Activated CD4-positive, alpha-beta memory T cell treated with anti-CD3 and anti-CD28 coated beads for 36 hours (primary cell): ENCODE measurements at regions of chr22 and their contacts with region 1.

Region 1: DNA sequence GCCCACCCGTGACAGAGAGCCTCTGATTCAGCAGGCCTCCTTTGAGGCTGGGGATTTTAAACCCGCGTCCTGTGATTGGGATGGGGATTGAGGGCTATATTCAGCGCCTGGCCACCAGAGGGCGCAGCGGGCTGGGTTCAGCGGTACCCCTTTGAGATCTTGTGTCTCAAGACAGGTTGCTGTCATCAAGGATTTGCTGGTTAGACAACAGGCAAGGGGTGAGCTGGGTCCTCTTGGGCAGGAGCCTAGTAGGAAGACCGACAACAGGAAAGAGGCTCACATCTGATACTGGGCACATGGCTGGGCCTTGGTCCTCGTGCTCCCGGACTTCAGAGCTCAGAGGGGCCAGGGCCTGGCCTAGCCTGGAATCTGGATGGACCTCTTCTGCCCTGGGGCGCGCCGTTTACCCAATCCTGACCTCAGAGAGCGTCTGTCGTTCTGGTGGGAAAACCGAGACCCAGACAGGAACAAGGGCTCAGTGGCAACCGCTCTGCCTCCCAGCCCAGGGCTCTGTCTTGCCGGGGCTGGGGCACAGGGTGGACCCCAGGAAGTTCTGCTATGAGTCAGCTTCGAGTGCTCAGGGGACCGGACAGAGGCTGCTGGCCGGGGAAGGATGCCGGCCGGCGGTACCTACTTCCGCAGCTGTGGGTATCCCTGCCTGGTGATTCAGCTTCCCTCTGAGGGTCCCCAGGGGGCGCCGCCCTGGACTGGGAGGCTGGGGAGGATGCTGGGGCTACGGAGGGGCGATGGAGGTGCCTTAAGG is 929 bp upstream of the SLC35E4 start:
- DNase-seq: peak; percentile 95
- H3K4me3 Mint-ChIP-seq: peak overlapping the region; percentile 81
- H3K27ac Mint-ChIP-seq: peak overlapping the region; percentile 88
- H3K4me1 Mint-ChIP-seq: peaks cover 20% of the 10 kb centered on the region
- H3K27me3 Mint-ChIP-seq: no peaks in the 10 kb centered on the region

Region 2: GRCh38 chr22:30413745-30414524 is 220.7 kb before region 1 on chr22:
- CTCF ChIA-PET with region 1: no interaction called
- POLR2A ChIA-PET with region 1: no interaction called
- intact Hi-C with region 1: no loop called
- DNase-seq: peak; percentile 31
- H3K4me3 Mint-ChIP-seq: no peak overlapping the region
- H3K27ac Mint-ChIP-seq: peak overlapping the region; percentile 70
- H3K4me1 Mint-ChIP-seq: peaks cover 23% of the 10 kb centered on the region
- H3K27me3 Mint-ChIP-seq: no peaks in the 10 kb centered on the region

Region 3: GRCh38 chr22:30559889-30560288 is 74.8 kb before region 1 on chr22:
- CTCF ChIA-PET with region 1: no interaction called
- POLR2A ChIA-PET with region 1: no interaction called
- intact Hi-C with region 1: no loop called
- DNase-seq: no peak
- H3K4me3 Mint-ChIP-seq: no peak overlapping the region
- H3K27ac Mint-ChIP-seq: no peak overlapping the region
- H3K4me1 Mint-ChIP-seq: no peaks in the 10 kb centered on the region
- H3K27me3 Mint-ChIP-seq: no peaks in the 10 kb centered on the region

Region 4: DNA sequence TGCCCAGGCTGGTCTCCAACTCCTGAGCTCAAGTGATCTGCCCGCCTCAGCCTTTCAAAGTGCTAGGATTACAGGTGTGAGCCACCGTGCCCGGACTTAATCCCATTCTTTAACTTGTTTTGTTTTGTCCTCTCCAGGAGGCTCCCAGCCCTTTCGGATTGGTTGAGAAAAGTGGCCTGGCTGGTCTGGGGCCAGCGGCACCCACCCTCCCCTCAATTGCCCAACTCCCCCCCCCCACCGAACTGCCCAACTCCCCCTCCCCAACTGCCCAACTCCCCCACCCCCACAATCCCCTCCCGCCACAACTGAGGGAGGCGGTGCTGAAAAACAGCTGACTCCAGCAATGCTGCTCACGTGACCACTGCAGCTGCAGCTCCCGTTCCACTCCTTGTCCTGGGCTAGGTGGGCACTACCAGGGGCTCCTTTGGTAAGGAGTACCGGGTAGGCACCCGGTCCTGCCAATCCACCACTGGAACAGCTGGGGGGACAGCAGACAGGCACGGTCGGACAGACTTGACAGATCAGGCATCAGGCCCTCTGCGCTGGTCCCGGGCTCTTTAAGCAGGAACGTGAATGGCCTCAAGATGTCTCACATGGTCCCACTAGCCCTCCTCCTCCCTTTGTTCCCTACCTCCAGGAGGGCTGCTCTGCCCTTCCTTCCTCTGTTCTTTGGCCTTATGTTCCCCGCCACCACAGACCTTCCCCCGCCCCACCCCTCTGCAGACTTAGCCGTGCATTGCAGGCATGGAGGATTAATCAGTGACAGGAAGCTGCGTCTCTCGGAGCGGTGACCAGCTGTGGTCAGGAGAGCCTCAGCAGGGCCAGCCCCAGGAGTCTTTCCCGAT is 28.0 kb before region 1 on chr22 and contains the start of gene TCN2:
- CTCF ChIA-PET with region 1: interaction called, 20 read pairs
- POLR2A ChIA-PET with region 1: no interaction called
- intact Hi-C with region 1: no loop called
- DNase-seq: peak; percentile 76
- H3K4me3 Mint-ChIP-seq: peak within 1 kb of the TSS; percentile 74
- H3K27ac Mint-ChIP-seq: peak within 1 kb of the TSS; percentile 54
- H3K4me1 Mint-ChIP-seq: peaks cover 33% of the 10 kb centered on the region
- H3K27me3 Mint-ChIP-seq: peaks cover 1% of the 10 kb centered on the region
- total RNA-seq, gene TCN2: 0.19 to 0.31 TPM

Region 5: DNA sequence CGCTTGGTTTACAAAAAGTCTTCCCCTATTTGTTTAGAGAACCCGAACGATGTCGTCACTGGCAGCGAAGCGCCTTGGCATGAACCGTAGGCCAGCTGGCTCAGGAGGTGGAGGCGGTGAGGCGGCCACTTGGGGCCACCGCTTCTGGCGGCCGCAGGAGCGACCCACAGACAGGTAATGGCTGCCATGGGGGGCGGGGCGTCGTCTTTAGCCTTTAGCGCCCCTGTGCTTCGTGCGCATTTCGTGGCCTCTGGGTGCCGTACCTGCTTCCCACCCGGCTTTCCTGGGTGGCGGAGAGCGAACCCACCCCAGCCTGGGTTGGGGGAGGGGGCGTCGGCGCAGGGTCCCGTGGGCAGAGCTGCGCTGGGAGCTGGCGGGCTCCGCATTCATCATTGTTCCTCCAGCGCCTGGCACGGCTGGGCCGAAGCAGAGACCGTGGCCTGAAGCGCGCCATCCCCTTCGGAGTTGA is 59.6 kb after region 1 on chr22:
- CTCF ChIA-PET with region 1: interaction called, 7 read pairs
- POLR2A ChIA-PET with region 1: interaction called, 4 read pairs
- intact Hi-C with region 1: loop called (anchors 1 kb)
- DNase-seq: peak; percentile 72
- H3K4me3 Mint-ChIP-seq: peak overlapping the region; percentile 81
- H3K27ac Mint-ChIP-seq: peak overlapping the region; percentile 57
- H3K4me1 Mint-ChIP-seq: peaks cover 16% of the 10 kb centered on the region
- H3K27me3 Mint-ChIP-seq: peaks cover 7% of the 10 kb centered on the region

Region 6: DNA sequence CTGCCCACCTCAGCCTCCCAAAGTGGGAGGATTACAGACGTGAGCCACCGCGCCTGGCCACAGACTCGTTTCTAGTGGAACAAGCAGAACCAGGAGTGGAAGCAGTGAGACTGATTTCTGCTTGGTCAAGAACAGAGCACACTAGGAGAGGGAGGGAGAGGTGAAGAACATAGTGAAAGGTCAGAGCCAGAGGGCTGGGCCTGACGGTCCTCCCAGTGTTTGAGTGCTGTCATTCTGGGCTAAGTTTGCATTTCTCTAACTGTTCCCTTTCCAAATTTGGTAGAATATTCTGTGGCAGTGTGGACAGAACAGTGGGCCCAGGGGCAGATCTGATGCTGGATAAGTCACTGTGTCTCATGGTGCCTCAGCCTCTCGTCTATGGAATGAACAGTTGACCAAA is 115.2 kb after region 1 on chr22:
- CTCF ChIA-PET with region 1: interaction called, 266 read pairs
- POLR2A ChIA-PET with region 1: interaction called, 17 read pairs
- intact Hi-C with region 1: loop called (anchors 1 kb)
- DNase-seq: no peak
- H3K4me3 Mint-ChIP-seq: no peak overlapping the region
- H3K27ac Mint-ChIP-seq: no peak overlapping the region
- H3K4me1 Mint-ChIP-seq: peaks cover 16% of the 10 kb centered on the region
- H3K27me3 Mint-ChIP-seq: no peaks in the 10 kb centered on the region

Region 7: GRCh38 chr22:30890686-30891442 is 256.2 kb after region 1 on chr22:
- CTCF ChIA-PET with region 1: interaction called, 24 read pairs
- POLR2A ChIA-PET with region 1: no interaction called
- intact Hi-C with region 1: no loop called
- DNase-seq: peak; percentile 43
- H3K4me3 Mint-ChIP-seq: no peak overlapping the region
- H3K27ac Mint-ChIP-seq: no peak overlapping the region
- H3K4me1 Mint-ChIP-seq: peaks cover 25% of the 10 kb centered on the region
- H3K27me3 Mint-ChIP-seq: no peaks in the 10 kb centered on the region